ENCODE measurements at regions of chr5 and their contacts with region 1.

Region 1: DNA sequence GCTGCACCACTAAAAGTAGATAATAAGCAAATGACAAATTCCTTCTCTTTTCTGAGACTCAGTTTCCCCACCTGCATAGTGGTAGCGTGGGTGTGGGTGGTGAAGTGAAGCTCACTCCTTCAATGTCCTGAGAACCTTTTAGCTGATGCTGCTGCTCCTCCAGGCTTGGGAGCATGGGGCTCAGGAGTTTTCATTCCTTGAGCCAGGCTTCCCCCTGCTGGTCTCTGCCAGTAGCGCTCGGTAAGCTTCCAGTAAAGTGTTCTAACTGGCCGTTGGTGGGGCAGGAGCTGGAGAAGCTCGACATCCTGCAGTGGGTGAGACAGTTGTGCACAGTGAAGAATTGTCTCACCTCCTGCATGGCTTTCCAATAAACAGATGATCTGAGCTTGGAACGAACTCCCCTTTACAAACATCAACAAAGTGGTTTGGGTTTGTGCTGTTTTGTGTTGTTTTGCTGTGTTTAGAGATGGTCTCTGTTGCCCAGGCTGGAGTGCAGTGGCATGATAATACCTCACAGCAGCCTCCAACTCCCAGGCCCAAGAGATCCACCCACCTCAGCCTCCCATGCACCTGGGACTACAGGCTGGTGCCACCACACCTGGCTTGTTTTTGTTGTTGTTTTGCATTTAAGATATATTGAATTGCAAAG is 34.6 kb downstream of the SPARC start:
- DNase-seq: peak; percentile 75
- ATAC-seq: peak; percentile 100
- H3K4me3 ChIP-seq: no peak overlapping the region
- H3K27ac ChIP-seq: no peak overlapping the region
- H3K4me1 ChIP-seq: peaks cover 2% of the 10 kb centered on the region; the same call in 1 of the 2 replicates
- H3K27me3 ChIP-seq: peaks cover 7% of the 10 kb centered on the region; the same call in 1 of the 2 replicates
- CTCF ChIP-seq: peak; percentile 98
- POLR2A ChIP-seq: no peak
- RAD21 ChIP-seq: peak; percentile 94

Region 2: GRCh38 chr5:151002250-151002649 is 649.9 kb before region 1 on chr5:
- CTCF ChIA-PET with region 1: interaction called, 3 read pairs
- POLR2A ChIA-PET with region 1: no interaction called
- dilution Hi-C with region 1: no loop called
- in situ Hi-C with region 1: no loop called
- intact Hi-C with region 1: loop called (anchors 5 kb)
- DNase-seq: peak; percentile 41
- ATAC-seq: peak; percentile 46
- H3K4me3 ChIP-seq: no peak overlapping the region
- H3K27ac ChIP-seq: no peak overlapping the region
- H3K4me1 ChIP-seq: peaks cover 12% of the 10 kb centered on the region; the same call in 1 of the 2 replicates
- H3K27me3 ChIP-seq: peaks cover 11% of the 10 kb centered on the region
- CTCF ChIP-seq: peak; percentile 64
- POLR2A ChIP-seq: no peak
- RAD21 ChIP-seq: peak; percentile 72

Region 3: GRCh38 chr5:151315998-151316597 is 336.0 kb before region 1 on chr5:
- CTCF ChIA-PET with region 1: interaction called, 5 read pairs
- POLR2A ChIA-PET with region 1: no interaction called
- dilution Hi-C with region 1: no loop called
- in situ Hi-C with region 1: no loop called
- intact Hi-C with region 1: loop called (anchors 1 kb)
- DNase-seq: peak; percentile 63
- ATAC-seq: peak; percentile 95
- H3K4me3 ChIP-seq: no peak overlapping the region
- H3K27ac ChIP-seq: no peak overlapping the region
- H3K4me1 ChIP-seq: no peaks in the 10 kb centered on the region
- H3K27me3 ChIP-seq: no peaks in the 10 kb centered on the region
- CTCF ChIP-seq: peak; percentile 81
- POLR2A ChIP-seq: no peak
- RAD21 ChIP-seq: peak; percentile 63

Region 4: GRCh38 chr5:151384106-151384505 is 268.0 kb before region 1 on chr5:
- CTCF ChIA-PET with region 1: interaction called, 3 read pairs
- POLR2A ChIA-PET with region 1: no interaction called
- dilution Hi-C with region 1: no loop called
- in situ Hi-C with region 1: no loop called
- intact Hi-C with region 1: loop called (anchors 5 kb)
- DNase-seq: peak; percentile 5
- ATAC-seq: peak; percentile 53
- H3K4me3 ChIP-seq: no peak overlapping the region
- H3K27ac ChIP-seq: no peak overlapping the region
- H3K4me1 ChIP-seq: no peaks in the 10 kb centered on the region
- H3K27me3 ChIP-seq: no peaks in the 10 kb centered on the region; the same call in 1 of the 2 replicates
- CTCF ChIP-seq: no peak
- POLR2A ChIP-seq: no peak
- RAD21 ChIP-seq: no peak

Region 5: DNA sequence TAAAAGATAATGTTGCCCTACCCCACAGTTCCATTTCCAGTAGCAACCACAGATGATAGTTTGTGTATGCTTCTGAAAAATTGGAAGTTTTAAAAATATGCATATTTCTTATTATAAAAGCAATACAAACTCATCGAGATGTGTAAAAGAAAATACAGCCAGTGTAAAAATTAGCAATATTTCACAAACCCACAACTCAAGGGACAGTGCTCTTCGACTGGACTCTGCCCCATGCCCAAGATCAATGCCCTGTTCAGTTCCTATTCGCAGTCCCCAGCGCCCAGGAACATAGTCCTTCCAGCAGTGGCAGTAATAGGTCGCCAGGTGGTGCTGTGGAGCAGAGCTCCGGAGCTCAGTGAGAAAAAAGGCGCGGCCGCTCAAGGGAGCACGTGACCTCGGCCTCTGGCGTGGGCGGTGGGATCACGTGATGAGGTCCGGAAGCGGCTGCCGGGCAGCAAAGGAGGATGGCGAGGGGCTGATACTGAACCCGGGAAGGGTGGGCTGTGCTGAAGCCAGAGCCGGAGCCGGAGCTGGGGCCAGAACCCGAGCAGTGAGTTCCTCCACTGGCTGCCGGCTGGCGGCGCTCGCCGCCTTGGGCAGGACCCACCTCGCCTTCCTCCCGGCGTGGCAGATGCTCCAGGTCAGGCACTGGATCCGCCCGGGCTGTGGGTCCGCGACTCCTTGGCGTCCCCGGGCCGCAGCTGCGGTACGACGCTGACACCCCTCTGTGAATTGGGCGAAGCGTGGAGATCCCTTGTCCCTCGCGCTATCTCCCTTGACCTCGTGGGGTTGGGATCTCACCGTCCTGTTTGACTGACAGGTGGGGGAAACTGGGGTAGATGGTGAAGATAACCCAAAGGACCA is 204.7 kb before region 1 on chr5 and contains the start of gene SLC36A1:
- CTCF ChIA-PET with region 1: interaction called, 16 read pairs
- POLR2A ChIA-PET with region 1: no interaction called
- dilution Hi-C with region 1: no loop called
- in situ Hi-C with region 1: loop called (anchors 5 kb)
- intact Hi-C with region 1: loop called (anchors 1 kb)
- DNase-seq: peak; percentile 86
- ATAC-seq: peak; percentile 90
- H3K4me3 ChIP-seq: peak within 1 kb of the TSS; percentile 74
- H3K27ac ChIP-seq: peak within 1 kb of the TSS; percentile 50
- H3K4me1 ChIP-seq: peaks cover 12% of the 10 kb centered on the region
- H3K27me3 ChIP-seq: peaks cover 2% of the 10 kb centered on the region; the same call in 1 of the 2 replicates
- CTCF ChIP-seq: peak; percentile 93
- POLR2A ChIP-seq: peak; percentile 41; the same call in 1 of the 2 replicates
- RAD21 ChIP-seq: peak; percentile 90
- total RNA-seq, gene SLC36A1: 5.3 and 5.7 TPM in 2 replicates

Region 6: GRCh38 chr5:151499501-151500035 is 152.6 kb before region 1 on chr5:
- CTCF ChIA-PET with region 1: interaction called, 3 read pairs
- POLR2A ChIA-PET with region 1: no interaction called
- dilution Hi-C with region 1: no loop called
- in situ Hi-C with region 1: no loop called
- intact Hi-C with region 1: loop called (anchors 5 kb)
- DNase-seq: no peak
- ATAC-seq: no peak
- H3K4me3 ChIP-seq: no peak overlapping the region
- H3K27ac ChIP-seq: no peak overlapping the region
- H3K4me1 ChIP-seq: no peaks in the 10 kb centered on the region
- H3K27me3 ChIP-seq: no peaks in the 10 kb centered on the region
- CTCF ChIP-seq: no peak
- POLR2A ChIP-seq: no peak
- RAD21 ChIP-seq: no peak

Region 7: GRCh38 chr5:151523335-151523734 is 128.8 kb before region 1 on chr5:
- CTCF ChIA-PET with region 1: interaction called, 16 read pairs
- POLR2A ChIA-PET with region 1: no interaction called
- dilution Hi-C with region 1: no loop called
- in situ Hi-C with region 1: no loop called
- intact Hi-C with region 1: loop called (anchors 1 kb)
- DNase-seq: peak; percentile 55
- ATAC-seq: peak; percentile 93
- H3K4me3 ChIP-seq: no peak overlapping the region
- H3K27ac ChIP-seq: no peak overlapping the region
- H3K4me1 ChIP-seq: no peaks in the 10 kb centered on the region
- H3K27me3 ChIP-seq: peaks cover 4% of the 10 kb centered on the region; the same call in 1 of the 2 replicates
- CTCF ChIP-seq: peak; percentile 67
- POLR2A ChIP-seq: no peak
- RAD21 ChIP-seq: peak; percentile 81

Region 8: DNA sequence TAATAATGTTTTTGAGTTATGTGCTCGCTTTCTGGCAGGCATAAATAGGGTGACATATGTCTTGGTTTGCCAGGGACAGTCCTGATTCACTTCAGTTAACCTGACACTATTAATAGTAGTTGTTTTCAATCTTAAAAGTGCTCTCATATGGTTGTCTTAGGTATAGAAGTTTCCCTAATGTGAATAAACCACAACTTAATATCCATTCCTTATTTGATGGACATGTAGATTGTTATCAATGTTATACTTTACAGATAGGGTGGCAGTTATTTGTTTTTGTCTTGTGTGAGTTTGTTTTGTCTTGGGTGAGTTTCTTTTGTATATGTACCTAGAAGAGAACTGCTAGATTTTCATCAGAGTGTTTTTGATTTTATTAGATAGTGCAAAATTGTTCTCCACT is 127.5 kb after region 1 on chr5:
- CTCF ChIA-PET with region 1: no interaction called
- POLR2A ChIA-PET with region 1: no interaction called
- dilution Hi-C with region 1: no loop called
- in situ Hi-C with region 1: no loop called
- intact Hi-C with region 1: no loop called
- DNase-seq: no peak
- ATAC-seq: no peak
- H3K4me3 ChIP-seq: no peak overlapping the region
- H3K27ac ChIP-seq: no peak overlapping the region
- H3K4me1 ChIP-seq: peaks cover 4% of the 10 kb centered on the region; the same call in 1 of the 2 replicates
- H3K27me3 ChIP-seq: no peaks in the 10 kb centered on the region
- CTCF ChIP-seq: no peak
- POLR2A ChIP-seq: no peak
- RAD21 ChIP-seq: no peak

Measured in IMR-90 (cell line).